A673 (cell line): ENCODE measurements at regions of chr12 and their contacts with region 1.

Region 1: GRCh38 chr12:100554608-100555077 is 18.8 kb upstream of the GAS2L3 start:
- DNase-seq: peak; percentile 80
- H3K4me3 ChIP-seq: no peak overlapping the region
- H3K27ac ChIP-seq: no peak overlapping the region
- H3K4me1 ChIP-seq: peaks cover 5% of the 10 kb centered on the region
- H3K27me3 ChIP-seq: no peaks in the 10 kb centered on the region
- CTCF ChIP-seq: peak; percentile 76

Region 2: DNA sequence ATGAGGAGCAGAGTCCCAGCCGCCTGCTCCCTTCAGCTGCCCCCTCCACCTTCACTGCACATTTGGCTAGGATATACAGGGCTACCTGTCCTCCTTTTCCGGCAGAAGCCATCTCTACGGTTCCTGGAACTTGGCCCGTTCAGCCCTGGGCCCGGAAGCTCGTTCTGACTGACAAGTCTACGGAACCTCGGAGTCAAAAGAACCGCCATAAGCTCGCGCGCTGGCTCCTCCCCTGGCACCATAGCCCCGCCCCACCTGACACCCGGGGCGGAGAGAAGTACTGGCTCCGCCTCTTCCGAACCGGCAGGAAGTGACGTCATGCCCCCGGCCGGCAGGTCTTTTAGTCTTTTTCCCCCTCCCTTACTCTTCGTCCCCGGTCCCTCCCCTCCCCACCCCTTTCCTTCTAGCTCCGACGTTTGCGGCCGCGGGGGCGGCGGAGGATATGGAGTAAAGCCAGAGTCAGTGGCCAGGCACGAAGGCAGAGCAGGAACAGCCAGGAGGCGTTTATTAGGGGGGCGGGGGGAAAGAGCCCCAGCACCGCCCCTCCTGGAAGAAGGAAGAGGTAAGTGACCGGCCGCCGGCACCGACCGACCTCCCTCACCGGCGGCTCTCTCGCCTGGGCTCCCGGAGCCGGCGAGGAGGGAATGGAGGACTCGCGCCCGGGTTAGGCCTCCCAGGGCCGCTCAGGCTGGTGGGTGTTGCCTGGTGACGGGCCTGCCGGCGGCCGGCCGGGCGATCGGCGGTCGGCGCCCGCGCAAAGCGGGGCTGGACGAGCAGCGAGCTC is 287.6 kb before region 1 on chr12 and contains the starts of genes DEPDC4 and SCYL2:
- CTCF ChIA-PET with region 1: no interaction called
- POLR2A ChIA-PET with region 1: interaction called, 6 read pairs
- intact Hi-C with region 1: loop called (anchors 1 kb)
- DNase-seq: peak; percentile 95
- H3K4me3 ChIP-seq: peak within 1 kb of the TSS; percentile 82
- H3K27ac ChIP-seq: peak within 1 kb of the TSS; percentile 93
- H3K4me1 ChIP-seq: peaks cover 49% of the 10 kb centered on the region
- H3K27me3 ChIP-seq: no peaks in the 10 kb centered on the region
- CTCF ChIP-seq: no peak
- total RNA-seq, gene DEPDC4: 2.0 and 3.2 TPM in 2 replicates
- total RNA-seq, gene SCYL2: 51.8 and 61.3 TPM in 2 replicates

Region 3: DNA sequence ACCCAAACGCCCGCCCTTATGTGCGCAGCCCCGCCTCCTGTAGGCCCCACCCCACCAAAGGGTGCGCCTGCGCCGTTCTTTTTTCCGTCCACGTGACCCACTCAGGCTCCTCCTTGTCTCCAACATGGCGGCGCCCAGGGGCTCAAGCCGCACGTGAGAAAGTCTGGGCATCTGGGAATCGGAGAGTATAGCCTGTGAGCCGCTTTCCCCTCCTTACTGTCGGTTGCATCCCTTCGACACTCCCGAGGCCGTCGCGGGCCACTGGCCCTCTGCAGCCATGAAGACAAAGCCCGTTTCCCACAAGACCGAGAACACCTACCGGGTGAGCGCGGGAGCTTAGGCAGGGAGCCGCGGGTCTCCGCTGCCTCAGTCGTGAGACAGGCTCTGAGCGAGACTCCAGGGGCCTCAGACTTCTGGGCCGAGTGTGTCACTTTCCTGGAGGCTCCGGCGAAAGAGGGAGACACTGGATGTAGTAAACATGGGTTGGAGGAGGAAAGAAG is 725.4 kb after region 1 on chr12 and contains the start of gene UTP20:
- CTCF ChIA-PET with region 1: interaction called, 11 read pairs
- POLR2A ChIA-PET with region 1: no interaction called
- intact Hi-C with region 1: no loop called
- DNase-seq: peak; percentile 92
- H3K4me3 ChIP-seq: peak within 1 kb of the TSS; percentile 66
- H3K27ac ChIP-seq: peak within 1 kb of the TSS; percentile 46
- H3K4me1 ChIP-seq: peaks cover 7% of the 10 kb centered on the region
- H3K27me3 ChIP-seq: no peaks in the 10 kb centered on the region
- CTCF ChIP-seq: no peak
- total RNA-seq, gene UTP20: 41.9 and 53.5 TPM in 2 replicates